ENCODE measurements at regions of chr1 and their contacts with region 1.

Region 1: GRCh38 chr1:145963995-145964901 is at the starts of genes ANKRD34A and POLR3GL:
- DNase-seq: peak; percentile 96 to 97 (median 97)
- ATAC-seq: peak; percentile 80 to 89 (median 88)
- H3K4me3 ChIP-seq: peak within 1 kb of the TSS; percentile 39 to 81 (median 73)
- H3K27ac ChIP-seq: peak within 1 kb of the TSS; percentile 71 to 98 (median 89)
- H3K4me1 ChIP-seq: peaks cover 0 to 57% (median 33%) of the 10 kb centered on the region in 12 donors
- H3K27me3 ChIP-seq: no peaks in the 10 kb centered on the region
- CTCF ChIP-seq: no peak
- POLR2A ChIP-seq: peak; percentile 86 to 98
- total RNA-seq, gene ANKRD34A: 1.0 to 3.5 (median 1.7) TPM
- total RNA-seq, gene POLR3GL: 30.2 to 45.7 (median 36.0) TPM

Region 2: DNA sequence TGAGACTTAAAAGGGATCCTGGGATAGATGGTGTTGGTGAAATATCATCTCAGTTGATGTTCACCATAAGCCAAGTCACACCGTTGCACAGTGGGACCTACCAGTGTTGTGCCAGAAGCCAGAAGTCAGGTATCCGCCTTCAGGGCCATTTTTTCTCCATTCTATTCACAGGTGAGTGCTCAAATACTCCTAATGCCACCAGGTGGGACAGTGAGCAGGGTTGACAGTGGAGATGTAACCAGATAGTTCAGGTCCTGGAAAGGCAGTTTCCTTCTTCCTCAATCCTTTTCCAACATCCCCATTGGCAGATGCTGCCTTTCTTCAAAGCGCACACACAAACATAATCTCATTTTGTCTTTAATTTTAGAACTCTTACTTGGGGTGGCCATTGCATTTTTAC is 233.3 kb before region 1 on chr1:
- intact Hi-C with region 1: no loop called
- DNase-seq: no peak
- ATAC-seq: no peak
- H3K4me3 ChIP-seq: no peak overlapping the region
- H3K27ac ChIP-seq: no peak overlapping the region
- H3K4me1 ChIP-seq: no peaks in the 10 kb centered on the region
- H3K27me3 ChIP-seq: no peaks in the 10 kb centered on the region
- CTCF ChIP-seq: no peak
- POLR2A ChIP-seq: no peak

Region 3: DNA sequence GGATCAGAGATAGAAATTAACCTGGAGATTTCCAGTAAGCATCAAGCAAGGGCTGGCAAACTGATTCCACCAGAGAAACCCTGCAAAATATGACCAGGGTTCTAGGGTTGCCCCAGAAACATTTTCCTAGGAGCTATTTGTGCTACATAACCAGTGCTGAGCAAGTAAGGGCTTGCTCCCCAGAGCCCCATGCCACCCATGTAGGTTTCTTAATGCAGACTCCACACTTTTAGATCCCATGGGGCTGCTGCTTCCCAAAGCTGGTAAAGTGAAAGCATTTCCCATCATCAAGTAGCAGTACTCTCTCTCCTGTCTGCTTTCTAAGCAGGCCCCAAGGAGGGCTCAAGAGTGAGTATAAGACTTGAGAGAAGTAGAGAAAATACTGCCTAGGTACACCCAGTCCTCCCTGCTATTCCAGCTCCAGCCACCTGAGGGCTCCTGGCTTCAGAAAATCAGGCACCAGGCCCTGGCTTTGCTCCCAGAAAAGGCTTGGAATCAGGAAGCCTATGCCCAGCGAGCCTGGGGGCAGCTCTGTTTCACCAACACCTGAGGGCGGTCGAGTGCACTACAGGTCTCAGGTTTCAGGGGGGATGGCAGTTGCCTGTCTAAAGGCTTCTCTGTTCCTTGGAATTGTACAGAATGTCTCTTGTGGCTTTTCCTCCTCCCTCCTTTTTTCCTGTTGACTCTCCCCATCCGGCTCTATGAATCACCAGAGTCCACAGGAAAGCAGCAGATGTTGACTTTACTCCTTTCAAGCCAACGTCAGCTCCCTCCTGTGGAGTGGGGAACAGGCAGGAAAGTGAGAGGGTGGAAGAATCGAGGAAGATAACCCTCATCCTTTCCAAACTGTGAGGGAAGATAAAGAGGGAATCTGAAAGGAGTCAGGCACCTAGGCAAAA is 72.4 kb before region 1 on chr1:
- intact Hi-C with region 1: loop called in 1 of 10 experiments (anchors 5 kb)
- DNase-seq: peak; percentile 89 to 95 (median 93)
- ATAC-seq: peak; percentile 87 to 95 (median 94)
- H3K4me3 ChIP-seq: peak overlapping the region in 9 of 12 donors; percentile 1 to 35 (median 10)
- H3K27ac ChIP-seq: peak overlapping the region; percentile 77 to 91 (median 83)
- H3K4me1 ChIP-seq: peaks cover 3 to 29% (median 26%) of the 10 kb centered on the region in 12 donors
- H3K27me3 ChIP-seq: no peaks in the 10 kb centered on the region
- CTCF ChIP-seq: peak; percentile 85 to 98 (median 94)
- POLR2A ChIP-seq: no peak

Region 4: DNA sequence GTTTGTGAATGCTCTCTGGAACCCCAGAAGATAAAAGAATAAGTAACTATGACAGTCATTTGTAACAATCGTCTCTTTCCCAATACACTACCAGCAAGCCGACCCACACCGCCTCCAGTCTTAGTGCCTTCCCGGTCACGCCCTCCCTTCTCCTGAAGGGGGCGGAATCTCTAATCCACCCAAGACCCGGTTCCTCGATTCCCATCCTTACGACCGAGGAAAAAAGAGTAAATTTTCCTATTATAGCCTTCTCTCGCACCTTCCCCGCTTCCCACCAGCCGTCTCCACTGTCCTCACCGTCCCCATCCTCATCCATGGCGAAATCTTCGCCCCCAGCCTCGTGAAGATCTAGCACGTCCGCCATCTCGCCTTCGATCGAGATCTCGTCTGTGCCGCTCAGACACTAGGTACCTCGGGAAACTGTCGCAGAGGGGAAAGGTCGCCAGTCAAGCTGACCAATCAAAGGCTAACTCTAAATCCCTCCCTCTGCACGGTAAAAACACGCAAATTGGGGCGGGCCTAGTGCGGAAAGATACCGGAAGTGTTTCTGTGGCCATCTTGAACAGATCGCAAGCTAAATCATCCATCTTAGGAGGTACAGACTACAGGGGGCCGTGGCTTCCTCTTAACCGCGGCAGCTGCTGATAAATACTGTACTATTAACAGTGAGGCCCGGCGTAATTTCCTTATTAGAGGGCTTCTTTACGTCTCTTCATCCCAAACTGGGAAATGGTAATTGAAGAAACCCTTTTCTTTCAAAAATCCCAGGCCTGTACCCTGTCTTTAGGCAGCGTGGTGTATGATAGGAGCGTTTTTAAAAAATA is 37.0 kb before region 1 on chr1 and contains the start of gene RBM8A:
- intact Hi-C with region 1: loop called in 3 of 10 experiments (anchors 2 to 5 kb)
- DNase-seq: peak; percentile 92 to 96 (median 96)
- ATAC-seq: peak; percentile 96 to 99 (median 98)
- H3K4me3 ChIP-seq: peak within 1 kb of the TSS; percentile 52 to 90 (median 74)
- H3K27ac ChIP-seq: peak within 1 kb of the TSS; percentile 88 to 99 (median 94)
- H3K4me1 ChIP-seq: peaks cover 0 to 21% (median 15%) of the 10 kb centered on the region in 12 donors
- H3K27me3 ChIP-seq: no peaks in the 10 kb centered on the region
- CTCF ChIP-seq: peak; percentile 35 to 70 (median 60)
- POLR2A ChIP-seq: peak in 1 of 2 donors; percentile 96
- total RNA-seq, gene RBM8A: 58.7 to 100 (median 75.7) TPM

Region 5: DNA sequence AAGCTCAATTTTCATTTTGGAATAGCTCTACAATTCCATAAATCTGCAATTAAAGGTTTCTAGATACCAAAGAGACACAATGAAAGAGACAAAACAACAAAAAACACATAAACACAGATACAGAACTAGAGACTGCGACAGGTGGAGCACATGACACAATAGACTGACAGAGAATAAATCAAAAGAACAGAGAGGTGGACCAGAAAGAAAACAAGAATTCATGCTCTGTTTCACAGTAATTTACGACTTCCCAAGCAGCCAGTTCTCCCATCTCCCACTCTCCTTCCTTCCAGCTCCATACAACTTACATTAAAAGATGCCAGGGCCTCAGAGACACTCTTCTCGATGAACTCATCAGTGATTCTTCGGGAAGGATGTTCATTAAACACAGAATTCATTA is 21.8 kb before region 1 on chr1:
- intact Hi-C with region 1: no loop called
- DNase-seq: no peak
- ATAC-seq: no peak
- H3K4me3 ChIP-seq: no peak overlapping the region
- H3K27ac ChIP-seq: no peak overlapping the region
- H3K4me1 ChIP-seq: no peaks in the 10 kb centered on the region
- H3K27me3 ChIP-seq: no peaks in the 10 kb centered on the region
- CTCF ChIP-seq: no peak
- POLR2A ChIP-seq: no peak

Region 6: DNA sequence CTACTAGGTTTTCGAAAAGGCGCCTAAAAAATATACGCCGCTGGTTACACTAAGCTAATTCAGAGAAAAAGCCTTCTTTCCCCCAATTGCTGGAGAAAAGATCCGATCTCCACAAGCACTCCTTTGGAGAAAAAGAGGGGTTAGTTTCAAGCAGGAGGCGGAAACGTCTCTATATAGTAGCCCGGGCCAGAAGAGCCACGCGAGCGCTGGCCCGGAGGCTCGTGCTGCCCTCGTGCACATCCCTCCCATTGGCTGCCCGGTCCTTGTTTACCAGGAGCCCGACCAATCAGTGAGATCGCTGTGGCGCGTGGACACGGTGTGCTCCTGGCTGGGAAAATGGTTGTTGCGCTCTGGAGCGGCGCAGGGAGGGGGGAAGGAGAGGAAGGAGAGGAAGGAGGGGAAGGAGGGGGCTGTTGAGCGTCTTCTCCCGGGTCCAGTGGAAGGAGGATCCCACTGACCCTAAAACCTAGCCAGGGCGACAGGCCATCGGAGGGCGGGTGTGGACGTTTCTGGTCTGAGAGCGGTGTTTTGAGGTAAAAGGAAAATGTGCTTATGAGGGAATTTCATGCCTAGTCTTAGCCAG is 32.3 kb after region 1 on chr1 and contains the start of gene TXNIP:
- intact Hi-C with region 1: loop called in 1 of 10 experiments (anchors 5 kb)
- DNase-seq: peak; percentile 99 to 100 (median 100)
- ATAC-seq: peak; percentile 85 to 98 (median 90)
- H3K4me3 ChIP-seq: peak within 1 kb of the TSS; percentile 59 to 94 (median 82)
- H3K27ac ChIP-seq: peak within 1 kb of the TSS; percentile 94 to 100 (median 97)
- H3K4me1 ChIP-seq: peaks cover 3 to 71% (median 43%) of the 10 kb centered on the region in 12 donors
- H3K27me3 ChIP-seq: no peaks in the 10 kb centered on the region
- CTCF ChIP-seq: no peak
- POLR2A ChIP-seq: peak; percentile 12 to 97
- total RNA-seq, gene TXNIP: 489 to 1,925 (median 1,000) TPM